ENCODE measurements at regions of chr14 and their contacts with region 1.

Region 1: GRCh38 chr14:79011091-79011919 is 841.1 kb downstream of the NRXN3 start:
- DNase-seq: peak; percentile 76
- H3K4me3 ChIP-seq: no peak overlapping the region
- H3K27ac ChIP-seq: peak overlapping the region; percentile 63
- H3K4me1 ChIP-seq: peaks cover 11% of the 10 kb centered on the region
- H3K27me3 ChIP-seq: no peaks in the 10 kb centered on the region
- CTCF ChIP-seq: peak in 1 of 2 donors; percentile 42
- POLR2A ChIP-seq: no peak

Region 2: DNA sequence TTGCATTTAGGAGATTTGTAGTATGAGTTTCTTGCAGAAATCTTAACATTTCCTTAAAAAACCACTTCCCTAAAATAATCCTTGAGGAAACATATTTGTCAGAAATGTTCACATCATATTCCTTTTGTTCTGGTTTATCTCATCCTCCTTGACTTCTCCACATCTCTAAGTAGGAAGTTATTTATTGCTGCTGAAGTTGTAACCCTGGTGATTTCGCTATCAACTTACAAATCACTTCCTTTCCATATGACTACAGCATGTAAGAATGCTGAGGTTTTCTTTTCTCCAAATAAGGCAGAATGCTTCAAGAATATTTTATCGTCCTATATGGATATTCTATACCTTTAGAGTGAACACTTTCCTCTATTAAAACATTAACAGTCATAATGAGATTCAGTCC is 89.4 kb before region 1 on chr14:
- CTCF ChIA-PET with region 1: no interaction called
- POLR2A ChIA-PET with region 1: no interaction called
- dilution Hi-C with region 1: no loop called
- intact Hi-C with region 1: loop called (anchors 1 kb)
- DNase-seq: peak; percentile 92
- H3K4me3 ChIP-seq: peak overlapping the region in 1 of 3 experiments; percentile 19
- H3K27ac ChIP-seq: peak overlapping the region; percentile 82
- H3K4me1 ChIP-seq: peaks cover 33% of the 10 kb centered on the region
- H3K27me3 ChIP-seq: no peaks in the 10 kb centered on the region
- CTCF ChIP-seq: no peak
- POLR2A ChIP-seq: peak; percentile 61

Region 3: GRCh38 chr14:78967110-78967809 is 44.0 kb before region 1 on chr14:
- CTCF ChIA-PET with region 1: interaction called, 4 read pairs
- POLR2A ChIA-PET with region 1: no interaction called
- dilution Hi-C with region 1: no loop called
- intact Hi-C with region 1: loop called (anchors 1 kb)
- DNase-seq: peak; percentile 56
- H3K4me3 ChIP-seq: no peak overlapping the region
- H3K27ac ChIP-seq: peak overlapping the region; percentile 60
- H3K4me1 ChIP-seq: peaks cover 33% of the 10 kb centered on the region
- H3K27me3 ChIP-seq: no peaks in the 10 kb centered on the region
- CTCF ChIP-seq: no peak
- POLR2A ChIP-seq: no peak

Region 4: GRCh38 chr14:78974691-78975090 is 36.6 kb before region 1 on chr14:
- CTCF ChIA-PET with region 1: interaction called, 4 read pairs
- POLR2A ChIA-PET with region 1: no interaction called
- dilution Hi-C with region 1: no loop called
- intact Hi-C with region 1: loop called (anchors 1 kb)
- DNase-seq: peak; percentile 88
- H3K4me3 ChIP-seq: no peak overlapping the region
- H3K27ac ChIP-seq: peak overlapping the region; percentile 84
- H3K4me1 ChIP-seq: peaks cover 25% of the 10 kb centered on the region
- H3K27me3 ChIP-seq: no peaks in the 10 kb centered on the region
- CTCF ChIP-seq: no peak
- POLR2A ChIP-seq: no peak

Region 5: GRCh38 chr14:79028281-79028680 is 17.0 kb after region 1 on chr14:
- CTCF ChIA-PET with region 1: no interaction called
- POLR2A ChIA-PET with region 1: no interaction called
- dilution Hi-C with region 1: no loop called
- intact Hi-C with region 1: no loop called
- DNase-seq: no peak
- H3K4me3 ChIP-seq: no peak overlapping the region
- H3K27ac ChIP-seq: no peak overlapping the region
- H3K4me1 ChIP-seq: peaks cover 4% of the 10 kb centered on the region
- H3K27me3 ChIP-seq: no peaks in the 10 kb centered on the region
- CTCF ChIP-seq: no peak
- POLR2A ChIP-seq: no peak

Region 6: DNA sequence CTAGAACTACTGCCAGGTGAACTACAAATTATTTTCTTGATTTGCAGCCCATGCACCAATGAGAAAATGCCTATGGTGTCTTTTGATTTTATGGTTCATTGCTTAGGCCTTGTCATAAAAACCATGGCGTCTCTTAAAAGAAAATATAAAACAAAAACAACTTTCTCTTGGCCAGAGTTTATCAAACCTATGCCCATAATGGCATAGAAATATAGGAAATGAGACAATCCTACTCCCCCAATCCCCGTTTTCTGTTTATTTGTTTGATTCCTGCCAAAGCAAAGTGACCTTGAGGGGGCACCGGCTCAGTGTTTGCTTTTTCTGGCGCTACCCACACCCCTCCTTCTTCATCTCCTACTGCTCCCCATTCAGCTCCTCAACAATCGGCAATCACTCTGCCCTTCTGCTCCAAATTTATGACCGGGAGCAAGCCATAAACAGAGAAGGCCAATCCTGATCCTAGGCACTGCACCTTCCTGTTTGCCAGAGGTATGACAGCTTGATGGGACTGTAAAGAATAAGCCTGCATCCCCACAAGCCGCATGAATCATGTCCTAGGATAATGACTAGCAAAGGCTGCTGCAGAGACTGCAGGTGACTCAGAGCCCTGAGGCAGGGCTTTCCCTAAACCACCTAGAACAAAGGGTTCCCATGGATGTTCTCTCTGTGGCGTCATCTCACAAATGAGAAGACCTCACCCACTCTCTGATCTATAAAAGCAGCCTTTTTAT is 33.8 kb after region 1 on chr14:
- CTCF ChIA-PET with region 1: no interaction called
- POLR2A ChIA-PET with region 1: no interaction called
- dilution Hi-C with region 1: no loop called
- intact Hi-C with region 1: loop called (anchors 1 kb)
- DNase-seq: peak; percentile 86
- H3K4me3 ChIP-seq: peak overlapping the region in 1 of 3 experiments; percentile 18
- H3K27ac ChIP-seq: peak overlapping the region; percentile 82
- H3K4me1 ChIP-seq: peaks cover 14% of the 10 kb centered on the region
- H3K27me3 ChIP-seq: no peaks in the 10 kb centered on the region
- CTCF ChIP-seq: no peak
- POLR2A ChIP-seq: no peak

Region 7: GRCh38 chr14:79278798-79279644 is 267.7 kb after region 1 on chr14:
- CTCF ChIA-PET with region 1: interaction called, 3 read pairs
- POLR2A ChIA-PET with region 1: no interaction called
- dilution Hi-C with region 1: no loop called
- intact Hi-C with region 1: loop called (anchors 2 kb)
- DNase-seq: peak; percentile 83
- H3K4me3 ChIP-seq: peak overlapping the region; percentile 33 to 62 (median 34)
- H3K27ac ChIP-seq: no peak overlapping the region
- H3K4me1 ChIP-seq: peaks cover 7% of the 10 kb centered on the region
- H3K27me3 ChIP-seq: peaks cover 16 to 33% of the 10 kb centered on the region in 2 experiments
- CTCF ChIP-seq: no peak
- POLR2A ChIP-seq: no peak

Region 8: GRCh38 chr14:79543971-79544697 is 532.8 kb after region 1 on chr14:
- CTCF ChIA-PET with region 1: interaction called, 10 read pairs
- POLR2A ChIA-PET with region 1: no interaction called
- dilution Hi-C with region 1: no loop called
- intact Hi-C with region 1: loop called (anchors 1 kb)
- DNase-seq: peak; percentile 10
- H3K4me3 ChIP-seq: no peak overlapping the region
- H3K27ac ChIP-seq: no peak overlapping the region
- H3K4me1 ChIP-seq: no peaks in the 10 kb centered on the region
- H3K27me3 ChIP-seq: no peaks in the 10 kb centered on the region
- CTCF ChIP-seq: peak; percentile 15 to 26
- POLR2A ChIP-seq: no peak